HEK293 (cell line): ENCODE measurements at regions of chr1 and their contacts with region 1.

Region 1: DNA sequence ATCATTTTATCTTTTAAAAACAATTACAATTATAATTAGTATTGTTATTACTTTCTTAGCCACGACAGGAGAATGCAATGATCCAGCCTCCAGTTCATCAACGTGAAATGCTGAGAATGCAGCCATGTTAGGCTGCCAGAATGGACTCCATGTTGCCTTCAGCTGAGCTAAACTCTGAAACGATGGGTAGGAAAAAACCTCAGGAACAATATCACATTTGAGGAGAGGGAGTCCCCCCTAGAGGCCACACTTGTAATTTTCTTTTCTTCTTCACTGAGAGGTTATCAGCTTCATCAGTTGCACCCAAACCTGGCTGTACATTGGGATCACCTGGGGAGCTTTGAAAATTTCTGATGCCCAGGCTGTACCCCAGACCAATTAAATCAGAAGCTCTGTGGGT is 34.6 kb upstream of the DNAH14 start:
- H3K4me3 ChIP-seq: no peak overlapping the region
- H3K27ac ChIP-seq: no peak overlapping the region
- H3K4me1 ChIP-seq: no peaks in the 10 kb centered on the region
- CTCF ChIP-seq: peak; percentile 38; the same call in 1 of the 2 replicates

Region 2: GRCh38 chr1:224689374-224689773 is 205.5 kb before region 1 on chr1:
- CTCF ChIA-PET with region 1: no interaction called
- POLR2A ChIA-PET with region 1: no interaction called
- H3K4me3 ChIP-seq: no peak overlapping the region
- H3K27ac ChIP-seq: no peak overlapping the region
- H3K4me1 ChIP-seq: peaks cover 6% of the 10 kb centered on the region
- CTCF ChIP-seq: no peak

Region 3: GRCh38 chr1:224879162-224879803 is 15.6 kb before region 1 on chr1:
- CTCF ChIA-PET with region 1: interaction called, 11 read pairs
- POLR2A ChIA-PET with region 1: no interaction called
- H3K4me3 ChIP-seq: no peak overlapping the region
- H3K27ac ChIP-seq: no peak overlapping the region
- H3K4me1 ChIP-seq: peaks cover 60% of the 10 kb centered on the region
- CTCF ChIP-seq: no peak

Region 4: GRCh38 chr1:224906340-224906739 is 11.4 kb after region 1 on chr1:
- CTCF ChIA-PET with region 1: interaction called, 16 read pairs
- POLR2A ChIA-PET with region 1: no interaction called
- H3K4me3 ChIP-seq: no peak overlapping the region
- H3K27ac ChIP-seq: no peak overlapping the region
- H3K4me1 ChIP-seq: no peaks in the 10 kb centered on the region
- CTCF ChIP-seq: no peak

Region 5: DNA sequence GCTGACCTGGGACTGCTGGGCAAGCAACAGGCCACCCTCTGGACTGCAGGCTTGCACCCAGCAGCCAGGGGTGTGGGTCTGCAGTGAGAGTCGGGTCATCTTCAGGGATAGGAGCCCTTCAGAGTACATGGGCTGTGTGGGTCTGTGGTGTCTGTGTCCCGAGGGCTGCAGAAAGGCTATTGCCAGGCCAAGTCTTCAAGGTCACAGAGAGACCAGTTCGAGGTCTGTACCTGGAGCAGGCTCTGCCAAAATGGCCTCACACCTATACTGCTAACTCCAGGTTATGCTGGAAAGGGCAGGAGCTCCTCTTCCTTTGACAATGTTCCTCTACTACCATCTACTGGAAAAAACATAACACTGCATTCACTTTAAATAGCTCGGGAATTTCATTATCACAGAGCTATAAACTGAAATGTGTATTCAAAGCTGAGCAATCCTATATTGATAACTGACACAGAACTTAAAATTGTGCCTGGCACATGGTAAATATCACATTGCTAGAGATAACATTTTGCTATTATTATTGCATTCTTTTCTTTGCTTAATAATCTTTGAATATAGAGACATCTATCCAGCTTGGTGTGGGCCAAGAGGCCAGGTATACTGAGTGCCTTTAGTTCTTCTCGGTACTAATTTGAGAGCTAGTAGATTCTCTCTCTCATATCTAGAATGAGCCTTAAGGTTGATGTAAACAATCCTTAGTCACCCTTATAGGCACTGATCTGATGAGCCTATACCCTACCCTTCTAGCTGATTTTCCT is 27.7 kb after region 1 on chr1:
- CTCF ChIA-PET with region 1: interaction called, 21 read pairs
- POLR2A ChIA-PET with region 1: no interaction called
- H3K4me3 ChIP-seq: no peak overlapping the region
- H3K27ac ChIP-seq: no peak overlapping the region
- H3K4me1 ChIP-seq: no peaks in the 10 kb centered on the region
- CTCF ChIP-seq: peak; percentile 87

Region 6: GRCh38 chr1:225004396-225004795 is 109.5 kb after region 1 on chr1:
- CTCF ChIA-PET with region 1: no interaction called
- POLR2A ChIA-PET with region 1: no interaction called
- H3K4me3 ChIP-seq: no peak overlapping the region
- H3K27ac ChIP-seq: no peak overlapping the region
- H3K4me1 ChIP-seq: no peaks in the 10 kb centered on the region
- CTCF ChIP-seq: no peak

Region 7: DNA sequence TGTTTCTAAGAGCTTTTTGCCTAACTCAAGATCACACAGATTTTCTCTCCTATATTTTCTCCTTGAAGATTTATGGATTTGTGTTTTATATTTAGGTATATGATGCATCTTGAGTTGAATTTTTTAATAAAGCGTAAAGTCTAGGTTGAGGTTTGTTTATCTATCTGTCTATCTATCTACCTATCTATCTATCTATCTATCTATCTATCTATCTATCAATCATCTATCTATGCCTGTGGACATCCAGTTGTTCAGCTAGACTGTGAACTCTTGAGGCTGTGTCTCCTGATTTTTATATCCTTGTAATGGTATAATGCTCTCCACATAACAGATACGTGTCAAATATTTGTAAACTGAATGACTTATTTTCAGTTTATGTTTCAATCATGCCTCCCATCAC is 154.7 kb after region 1 on chr1:
- CTCF ChIA-PET with region 1: no interaction called
- POLR2A ChIA-PET with region 1: no interaction called
- H3K4me3 ChIP-seq: no peak overlapping the region
- H3K27ac ChIP-seq: no peak overlapping the region
- H3K4me1 ChIP-seq: no peaks in the 10 kb centered on the region
- CTCF ChIP-seq: no peak